Caco-2 (cell line): ENCODE measurements at regions of chr5 and their contacts with region 1.

Region 1: DNA sequence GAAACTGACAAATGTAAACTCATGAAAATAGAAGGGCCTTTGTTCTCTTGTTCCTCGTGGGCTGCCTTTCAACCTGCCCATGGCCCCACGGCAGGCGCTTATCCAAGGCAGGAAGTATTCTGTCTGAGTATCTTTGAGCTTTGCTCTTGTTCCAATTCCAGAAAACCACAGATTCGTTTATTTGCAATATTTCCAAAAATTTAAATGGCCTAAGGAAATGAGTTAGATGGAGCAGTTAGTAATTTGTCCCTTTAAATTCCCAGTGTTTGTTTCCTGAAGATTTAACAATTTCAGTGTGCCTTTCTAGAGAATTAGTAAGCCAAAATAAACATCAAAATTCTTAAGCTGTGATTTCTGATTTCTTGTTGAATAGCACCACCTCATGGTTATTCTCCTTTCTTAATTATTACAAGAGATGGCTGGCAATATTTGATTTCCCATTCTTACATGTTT is 299.4 kb upstream of the RASA1 start:
- DNase-seq: no peak
- H3K4me3 ChIP-seq: no peak overlapping the region
- H3K4me3 Mint-ChIP-seq: no peak overlapping the region
- H3K27ac Mint-ChIP-seq: no peak overlapping the region
- H3K4me1 ChIP-seq: no peaks in the 10 kb centered on the region
- H3K4me1 Mint-ChIP-seq: no peaks in the 10 kb centered on the region
- H3K27me3 ChIP-seq: no peaks in the 10 kb centered on the region
- H3K27me3 Mint-ChIP-seq: peaks cover 11% of the 10 kb centered on the region
- CTCF ChIP-seq: peak in 1 of 2 experiments; percentile 27

Region 2: GRCh38 chr5:86894006-86894560 is 74.2 kb before region 1 on chr5:
- CTCF ChIA-PET with region 1: no interaction called
- POLR2A ChIA-PET with region 1: no interaction called
- intact Hi-C with region 1: no loop called
- DNase-seq: no peak
- H3K4me3 ChIP-seq: no peak overlapping the region
- H3K4me3 Mint-ChIP-seq: no peak overlapping the region
- H3K27ac Mint-ChIP-seq: no peak overlapping the region
- H3K4me1 ChIP-seq: no peaks in the 10 kb centered on the region
- H3K4me1 Mint-ChIP-seq: no peaks in the 10 kb centered on the region
- H3K27me3 ChIP-seq: no peaks in the 10 kb centered on the region
- H3K27me3 Mint-ChIP-seq: no peaks in the 10 kb centered on the region
- CTCF ChIP-seq: no peak

Region 3: GRCh38 chr5:87008751-87009560 is 40.6 kb after region 1 on chr5:
- CTCF ChIA-PET with region 1: no interaction called
- POLR2A ChIA-PET with region 1: no interaction called
- intact Hi-C with region 1: loop called (anchors 1 kb)
- DNase-seq: no peak
- H3K4me3 ChIP-seq: no peak overlapping the region
- H3K4me3 Mint-ChIP-seq: no peak overlapping the region
- H3K27ac Mint-ChIP-seq: no peak overlapping the region
- H3K4me1 ChIP-seq: no peaks in the 10 kb centered on the region
- H3K4me1 Mint-ChIP-seq: no peaks in the 10 kb centered on the region
- H3K27me3 ChIP-seq: no peaks in the 10 kb centered on the region
- H3K27me3 Mint-ChIP-seq: peaks cover 14% of the 10 kb centered on the region
- CTCF ChIP-seq: no peak

Region 4: DNA sequence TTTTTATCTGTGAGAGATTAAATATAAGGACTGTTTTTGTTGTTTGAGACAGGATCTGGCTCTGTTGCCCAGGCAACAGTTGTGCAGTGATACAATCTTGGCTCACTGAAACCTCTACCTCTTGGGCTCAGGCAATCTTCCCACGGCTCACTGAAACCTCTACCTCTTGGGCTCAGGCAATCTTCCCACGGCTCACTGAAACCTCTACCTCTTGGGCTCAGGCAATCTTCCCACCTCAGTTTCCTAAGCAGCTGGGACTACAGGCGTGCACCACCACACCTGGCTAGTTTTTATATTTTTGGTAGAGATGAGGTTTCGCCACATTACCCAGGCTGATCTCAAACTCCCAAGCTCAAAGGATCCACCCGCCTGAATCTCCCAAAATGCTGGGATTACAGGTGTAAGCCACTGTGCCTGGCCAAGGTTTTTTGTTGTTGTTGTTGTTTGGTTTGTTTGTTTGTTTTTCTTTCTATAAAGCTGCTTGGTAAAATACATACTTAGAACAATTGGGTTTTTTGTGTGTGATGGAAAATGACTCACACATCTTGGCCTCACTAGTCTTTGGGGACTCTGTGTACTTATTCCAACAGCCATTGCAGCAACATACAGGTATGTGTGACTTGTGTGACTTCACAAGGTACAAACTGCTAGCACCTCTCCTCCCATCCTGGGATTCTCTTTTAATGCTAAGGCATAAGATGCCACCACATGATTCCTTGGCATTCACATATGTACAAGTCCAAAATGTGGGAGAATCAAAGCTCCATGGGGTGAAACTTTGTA is 262.9 kb after region 1 on chr5:
- CTCF ChIA-PET with region 1: no interaction called
- POLR2A ChIA-PET with region 1: no interaction called
- intact Hi-C with region 1: no loop called
- DNase-seq: no peak
- H3K4me3 ChIP-seq: no peak overlapping the region
- H3K4me3 Mint-ChIP-seq: no peak overlapping the region
- H3K27ac Mint-ChIP-seq: no peak overlapping the region
- H3K4me1 ChIP-seq: peaks cover 6% of the 10 kb centered on the region
- H3K4me1 Mint-ChIP-seq: peaks cover 8% of the 10 kb centered on the region
- H3K27me3 ChIP-seq: no peaks in the 10 kb centered on the region
- H3K27me3 Mint-ChIP-seq: peaks cover 5% of the 10 kb centered on the region
- CTCF ChIP-seq: no peak